ENCODE measurements at regions of chr4 and their contacts with region 1.

Region 1: DNA sequence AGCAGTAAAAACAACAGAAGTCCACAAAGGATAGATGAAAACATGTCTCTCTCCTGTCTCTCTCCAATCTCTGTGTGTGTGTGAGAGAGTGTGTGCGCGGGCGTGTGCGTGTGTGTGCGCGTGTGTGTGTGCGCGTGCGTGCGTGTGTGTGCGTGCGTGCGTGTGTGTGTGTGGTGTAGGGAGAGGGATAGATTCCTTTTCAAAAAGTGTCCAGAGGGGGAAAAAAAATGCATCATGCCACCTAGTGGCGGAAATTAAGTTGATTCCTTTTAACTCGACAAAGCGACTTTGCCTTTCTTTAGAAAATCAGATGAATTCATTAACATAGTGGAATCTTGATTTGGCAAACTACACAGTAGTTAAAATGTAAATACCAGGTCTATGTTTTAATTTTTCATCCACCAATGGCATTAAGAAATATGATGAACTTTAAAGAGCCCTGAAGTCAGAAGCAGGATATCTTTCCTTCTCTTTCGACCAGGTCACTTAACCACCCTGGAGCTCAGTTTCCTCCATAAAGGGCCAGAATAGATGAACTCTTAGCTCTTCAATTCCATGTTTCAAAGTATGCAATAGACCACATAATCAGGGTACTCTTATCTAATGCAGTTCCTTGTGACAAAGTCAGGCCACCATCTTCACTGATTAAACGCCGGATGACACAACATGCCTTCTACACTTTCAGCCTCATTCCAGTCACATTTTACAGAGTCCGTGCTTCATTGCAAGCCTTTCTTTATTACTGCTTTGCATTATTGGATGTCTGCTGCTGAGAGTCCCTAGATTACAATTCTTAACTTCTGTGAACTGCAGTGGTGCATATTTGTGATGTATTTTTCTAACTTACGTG is 162.8 kb downstream of the FBXO8 start:
- DNase-seq: no peak
- ATAC-seq: peak; percentile 67 to 83 (median 81)
- H3K4me3 ChIP-seq: no peak overlapping the region
- H3K27ac ChIP-seq: no peak overlapping the region
- H3K4me1 ChIP-seq: no peaks in the 10 kb centered on the region
- H3K27me3 ChIP-seq: peaks cover 0 to 3% of the 10 kb centered on the region in 2 donors
- CTCF ChIP-seq: peak; percentile 42 to 52 (median 48)
- POLR2A ChIP-seq: no peak

Region 2: DNA sequence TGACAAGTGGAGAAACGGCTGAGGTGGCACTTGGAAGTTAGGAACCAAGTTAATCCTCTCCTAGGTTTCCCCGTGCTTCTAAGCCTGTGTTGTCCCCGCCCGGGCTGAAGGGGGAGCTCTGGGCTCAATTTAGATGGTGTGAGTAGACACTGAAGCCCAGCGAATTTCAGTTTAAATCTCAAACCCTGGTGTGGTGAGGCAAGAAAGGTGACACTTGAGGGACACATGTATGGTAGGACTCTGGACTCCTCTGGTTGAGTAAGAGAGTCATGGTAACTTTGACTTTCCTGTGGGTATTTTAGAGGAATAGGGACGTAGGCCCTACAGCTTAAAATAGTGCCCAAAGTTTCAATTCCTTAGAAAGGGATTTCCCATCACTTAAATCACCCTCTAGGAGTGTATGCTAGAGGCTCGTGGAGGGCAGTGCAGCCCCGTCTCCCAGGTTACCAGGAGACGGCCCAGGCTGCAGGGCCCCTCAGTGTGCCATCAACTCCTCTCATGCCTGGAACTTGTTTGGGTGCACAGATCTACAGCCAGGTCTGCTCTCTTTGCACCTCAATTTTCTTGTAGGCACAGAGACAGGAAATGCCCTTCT is 614.6 kb before region 1 on chr4:
- intact Hi-C with region 1: loop called in 1 of 2 experiments (anchors 10 kb)
- DNase-seq: peak in 1 of 3 donors; percentile 57
- ATAC-seq: peak; percentile 71 to 80 (median 74)
- H3K4me3 ChIP-seq: no peak overlapping the region
- H3K27ac ChIP-seq: no peak overlapping the region
- H3K4me1 ChIP-seq: peaks cover 0 to 9% (median 0%) of the 10 kb centered on the region in 4 donors
- H3K27me3 ChIP-seq: peaks cover 5 to 69% of the 10 kb centered on the region in 2 donors
- CTCF ChIP-seq: peak; percentile 48 to 69 (median 60)
- POLR2A ChIP-seq: no peak

Region 3: DNA sequence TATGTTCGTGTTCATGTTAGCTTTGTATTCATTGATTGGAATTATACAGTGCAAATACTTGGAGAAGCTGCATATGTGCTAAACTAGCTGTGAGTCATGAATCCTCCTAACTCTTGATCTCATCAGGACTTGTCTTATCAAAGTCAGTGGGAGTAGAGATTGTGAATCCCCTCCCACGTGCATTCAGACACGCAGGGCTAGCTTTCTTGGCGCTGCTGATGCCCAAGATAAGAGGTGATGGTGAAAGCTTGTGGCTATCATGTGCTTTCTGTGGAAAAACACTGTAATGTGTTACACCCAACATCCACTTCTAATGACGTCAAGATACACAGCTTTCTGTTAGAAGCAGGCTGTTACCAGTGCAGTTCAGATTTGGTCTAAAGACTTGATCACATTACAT is 242.0 kb before region 1 on chr4:
- intact Hi-C with region 1: no loop called
- DNase-seq: no peak
- ATAC-seq: no peak
- H3K4me3 ChIP-seq: no peak overlapping the region
- H3K27ac ChIP-seq: no peak overlapping the region
- H3K4me1 ChIP-seq: no peaks in the 10 kb centered on the region
- H3K27me3 ChIP-seq: no peaks in the 10 kb centered on the region
- CTCF ChIP-seq: no peak
- POLR2A ChIP-seq: no peak

Region 4: DNA sequence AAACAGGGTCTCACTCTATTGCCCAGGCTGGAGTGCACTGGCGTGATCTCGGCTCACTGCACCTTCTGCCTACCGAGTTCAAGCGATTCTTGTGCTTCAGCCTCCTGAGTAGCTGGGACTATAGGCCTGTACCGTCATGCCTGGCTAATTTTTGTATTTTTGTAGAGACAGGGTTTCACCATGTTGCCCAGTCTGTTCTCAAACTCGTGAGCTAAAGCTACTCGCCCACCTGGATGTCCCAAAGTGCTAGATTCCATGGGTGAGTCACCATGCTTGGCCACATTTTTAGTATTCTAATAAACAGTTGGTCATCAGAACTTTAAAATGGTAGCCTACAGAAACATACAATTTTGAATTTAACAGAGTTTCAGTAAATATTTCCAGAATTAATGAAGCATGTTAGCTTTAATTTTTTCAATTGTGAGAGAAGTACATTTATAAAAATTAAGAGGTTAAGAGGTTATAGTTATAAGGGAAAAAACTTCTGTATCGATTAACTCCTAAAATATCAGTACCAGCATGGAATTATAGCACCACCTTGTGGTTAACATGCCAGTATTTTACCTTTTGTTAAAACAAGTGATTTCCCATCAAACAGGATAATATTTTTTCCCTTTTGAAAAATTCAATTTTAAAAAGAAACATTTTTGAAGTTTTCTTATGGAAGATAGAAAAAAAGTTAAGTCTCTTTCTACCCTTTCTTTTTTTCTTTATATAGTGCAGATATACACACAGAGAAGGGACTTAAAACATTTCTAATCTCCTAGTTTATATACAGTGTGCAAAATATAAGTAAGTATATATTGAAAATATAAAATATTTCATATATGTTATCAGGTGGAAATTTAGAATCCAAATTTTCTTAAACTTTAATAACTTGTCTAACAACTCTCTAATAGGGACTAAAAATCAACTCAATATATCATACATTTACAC is 198.4 kb after region 1 on chr4:
- intact Hi-C with region 1: no loop called
- DNase-seq: no peak
- ATAC-seq: peak; percentile 36 to 70 (median 59)
- H3K4me3 ChIP-seq: no peak overlapping the region
- H3K27ac ChIP-seq: no peak overlapping the region
- H3K4me1 ChIP-seq: no peaks in the 10 kb centered on the region
- H3K27me3 ChIP-seq: no peaks in the 10 kb centered on the region
- CTCF ChIP-seq: peak; percentile 79 to 88 (median 81)
- POLR2A ChIP-seq: no peak

Measured in right lobe of liver (tissue), 6 donors.